Activated T-helper 1 cell treated with anti-CD3 and anti-CD28 coated beads, Interleukin-12 subunit alpha, Interleukin-12 subunit beta, Interleukin-2, Interleukin-4 antibody, amounts not matched to agents 30 ng/mL and 10 ng/mL and 1 ng/mL, durations not matched to agents 14 hours and 24 hours and 36 hours (primary cell): ENCODE measurements at regions of chr1 and their contacts with region 1.

Region 1: DNA sequence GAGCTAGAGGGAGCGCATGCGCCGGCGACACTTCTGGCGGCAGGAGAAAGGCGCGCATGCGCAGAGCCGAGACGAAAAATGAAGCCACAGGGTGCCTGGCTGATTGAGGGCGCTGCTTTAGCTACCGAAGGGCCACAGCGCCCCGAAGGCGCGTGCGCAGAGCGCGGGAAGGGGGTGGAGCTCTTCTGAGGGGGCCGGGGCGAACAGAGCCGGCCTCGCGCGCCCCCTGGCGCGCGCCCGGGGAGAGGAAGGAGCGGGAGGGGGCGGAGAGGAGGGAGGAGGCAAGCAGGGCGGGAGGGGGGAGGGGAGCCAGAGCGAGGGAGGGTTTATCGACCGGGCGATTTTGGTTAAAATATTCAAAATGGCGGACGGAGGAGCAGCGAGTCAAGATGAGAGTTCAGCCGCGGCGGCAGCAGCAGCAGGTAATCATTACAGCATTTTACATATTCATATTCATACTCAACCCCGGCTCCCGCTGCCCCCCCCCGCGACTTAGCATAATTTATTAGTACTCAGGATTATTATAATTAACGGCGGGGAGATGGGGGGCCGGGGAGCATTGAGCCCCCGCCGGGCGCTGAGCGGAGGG is at the start of gene POU2F1:
- DNase-seq: peak; percentile 98
- H3K4me3 Mint-ChIP-seq: peak within 1 kb of the TSS; percentile 93
- H3K27ac Mint-ChIP-seq: peak within 1 kb of the TSS; percentile 93
- H3K4me1 Mint-ChIP-seq: peaks cover 42% of the 10 kb centered on the region
- H3K27me3 Mint-ChIP-seq: peaks cover 4% of the 10 kb centered on the region
- total RNA-seq, gene POU2F1: 20.2 and 24.6 TPM in 2 replicates

Region 2: GRCh38 chr1:166875734-166876539 is 344.7 kb before region 1 on chr1 and contains the start of gene TADA1:
- intact Hi-C with region 1: loop called (anchors 1 kb)
- DNase-seq: peak; percentile 97
- H3K4me3 Mint-ChIP-seq: peak within 1 kb of the TSS; percentile 92
- H3K27ac Mint-ChIP-seq: peak within 1 kb of the TSS; percentile 98
- H3K4me1 Mint-ChIP-seq: peaks cover 50% of the 10 kb centered on the region
- H3K27me3 Mint-ChIP-seq: peaks cover 3% of the 10 kb centered on the region
- total RNA-seq, gene TADA1: 15.6 and 17.3 TPM in 2 replicates

Region 3: DNA sequence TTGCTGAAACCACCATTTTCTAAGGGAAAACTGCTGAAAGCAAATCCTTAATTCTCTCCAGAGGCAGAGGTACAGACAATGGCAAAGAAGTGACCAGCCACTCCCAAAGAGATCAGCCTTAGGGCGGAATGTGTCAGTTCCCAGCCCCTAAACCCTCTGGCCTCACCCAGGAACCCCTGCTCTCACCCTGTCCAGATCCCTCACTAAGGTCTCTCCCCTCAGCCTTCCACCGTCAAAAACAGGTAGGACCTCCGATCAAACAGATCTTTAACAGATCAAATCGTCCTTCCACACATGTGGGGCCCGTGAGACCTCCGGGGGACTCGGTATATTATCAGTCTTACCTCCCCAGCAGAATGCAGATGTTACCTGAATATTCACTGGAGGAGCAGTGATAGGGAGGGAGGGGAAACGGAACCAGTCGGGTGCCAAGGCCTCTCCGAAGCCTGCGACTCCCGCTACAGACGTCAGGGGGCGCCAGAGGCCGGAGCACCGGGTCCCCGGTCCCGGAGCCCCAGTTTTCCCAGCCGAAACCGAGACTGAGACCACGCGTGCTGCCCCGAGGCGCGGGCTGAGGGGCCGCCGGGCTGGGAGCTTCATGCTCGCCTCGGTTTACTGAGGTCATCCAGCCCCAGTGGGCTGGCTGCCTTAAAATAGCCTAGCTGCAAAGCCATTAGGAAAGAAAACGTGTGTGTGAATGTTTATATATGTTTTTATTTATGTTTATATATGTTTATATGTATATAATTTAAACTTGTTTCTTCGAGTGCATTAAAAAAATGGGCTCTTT is 154.1 kb before region 1 on chr1:
- intact Hi-C with region 1: loop called (anchors 1 kb)
- DNase-seq: peak; percentile 68
- H3K4me3 Mint-ChIP-seq: peak overlapping the region; percentile 31
- H3K27ac Mint-ChIP-seq: no peak overlapping the region
- H3K4me1 Mint-ChIP-seq: no peaks in the 10 kb centered on the region
- H3K27me3 Mint-ChIP-seq: no peaks in the 10 kb centered on the region

Region 4: DNA sequence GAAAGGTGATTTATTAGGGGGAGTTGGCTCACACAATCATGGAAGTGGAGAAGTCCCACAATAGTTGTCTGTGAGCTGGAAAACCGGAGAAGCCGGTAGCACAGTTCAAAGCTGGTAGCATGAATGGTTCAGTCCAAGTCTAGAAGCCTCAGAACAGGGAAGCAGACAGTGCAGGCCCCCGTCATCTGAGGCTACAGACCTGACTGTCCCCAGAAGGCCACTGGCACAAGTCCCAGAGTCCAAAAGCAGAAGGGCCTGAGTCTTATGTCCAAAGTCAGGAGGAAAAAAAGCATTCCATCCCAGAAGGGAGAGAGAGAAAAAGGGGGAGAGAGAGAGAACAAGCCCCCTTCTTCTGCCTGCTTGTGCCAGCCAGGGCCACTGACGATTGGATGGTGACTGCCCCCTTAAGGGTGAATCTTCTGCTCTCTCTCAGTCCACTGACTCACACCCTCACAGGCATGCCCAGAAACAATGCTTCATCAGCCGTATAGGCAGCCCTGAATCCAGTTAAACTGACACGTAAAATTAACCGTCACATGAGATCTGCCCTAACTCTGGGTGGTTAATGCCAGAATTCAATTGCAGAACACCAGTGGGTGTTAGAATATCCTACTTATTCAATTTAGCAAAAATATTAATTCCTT is 49.2 kb before region 1 on chr1:
- intact Hi-C with region 1: no loop called
- DNase-seq: no peak
- H3K4me3 Mint-ChIP-seq: no peak overlapping the region
- H3K27ac Mint-ChIP-seq: no peak overlapping the region
- H3K4me1 Mint-ChIP-seq: no peaks in the 10 kb centered on the region
- H3K27me3 Mint-ChIP-seq: peaks cover 27% of the 10 kb centered on the region

Region 5: DNA sequence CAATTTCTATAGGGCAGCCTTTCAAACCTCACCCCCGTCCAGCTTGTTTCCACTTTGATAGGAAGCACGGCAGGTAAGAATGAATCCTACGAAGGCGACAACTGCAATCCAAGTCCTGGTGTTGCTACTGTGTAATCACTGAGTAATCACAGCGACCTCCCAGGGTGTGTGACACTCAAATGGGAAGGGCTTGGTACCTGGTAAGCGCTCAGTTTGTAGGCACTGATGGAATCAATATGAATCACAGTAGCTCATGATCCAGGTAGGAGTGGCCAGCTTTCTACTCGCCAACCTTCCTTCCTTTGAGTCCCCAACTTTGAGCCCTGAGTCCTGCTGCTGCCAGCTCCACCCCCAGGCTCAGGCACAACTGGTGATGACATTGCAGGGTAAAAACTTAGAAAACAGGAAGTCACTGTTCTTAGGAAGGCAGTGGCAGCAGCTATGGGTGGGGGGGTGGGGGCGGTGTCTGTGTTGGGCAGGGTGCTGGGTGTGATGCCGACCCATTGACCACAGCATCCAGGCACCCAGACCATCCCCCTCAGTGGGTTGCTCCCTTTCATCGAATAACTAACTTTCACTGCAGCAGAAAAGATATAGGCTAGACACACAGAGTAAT is 227.0 kb after region 1 on chr1:
- intact Hi-C with region 1: loop called (anchors 1 kb)
- DNase-seq: peak; percentile 70
- H3K4me3 Mint-ChIP-seq: peak overlapping the region; percentile 68
- H3K27ac Mint-ChIP-seq: peak overlapping the region; percentile 90
- H3K4me1 Mint-ChIP-seq: peaks cover 77% of the 10 kb centered on the region
- H3K27me3 Mint-ChIP-seq: no peaks in the 10 kb centered on the region

Region 6: GRCh38 chr1:167553136-167554027 is 332.8 kb after region 1 on chr1 and contains the start of gene CREG1:
- intact Hi-C with region 1: loop called (anchors 1 kb)
- DNase-seq: peak; percentile 89
- H3K4me3 Mint-ChIP-seq: peak within 1 kb of the TSS; percentile 86
- H3K27ac Mint-ChIP-seq: peak within 1 kb of the TSS; percentile 4
- H3K4me1 Mint-ChIP-seq: peaks cover 40% of the 10 kb centered on the region
- H3K27me3 Mint-ChIP-seq: peaks cover 1% of the 10 kb centered on the region
- total RNA-seq, gene CREG1: 15.3 and 16.8 TPM in 2 replicates

Region 7: GRCh38 chr1:167936068-167936929 is 715.7 kb after region 1 on chr1 and contains the start of gene DCAF6:
- intact Hi-C with region 1: loop called (anchors 1 kb)
- DNase-seq: peak; percentile 98
- H3K4me3 Mint-ChIP-seq: peak within 1 kb of the TSS; percentile 91
- H3K27ac Mint-ChIP-seq: peak within 1 kb of the TSS; percentile 98
- H3K4me1 Mint-ChIP-seq: peaks cover 41% of the 10 kb centered on the region
- H3K27me3 Mint-ChIP-seq: no peaks in the 10 kb centered on the region
- total RNA-seq, gene DCAF6: 20.9 and 24.0 TPM in 2 replicates